ENCODE measurements at regions of chr4 and their contacts with region 1.

Region 1: GRCh38 chr4:7192252-7193029 is at the start of gene SORCS2:
- DNase-seq: peak; percentile 60 to 81 (median 71)
- ATAC-seq: peak; percentile 44 to 90 (median 74)
- H3K4me3 ChIP-seq: peak within 1 kb of the TSS; percentile 19 to 56 (median 44)
- H3K27ac ChIP-seq: no peak within 1 kb of the TSS
- H3K4me1 ChIP-seq: peaks cover 0 to 21% (median 12%) of the 10 kb centered on the region in 12 donors
- H3K27me3 ChIP-seq: peaks cover 10 to 63% (median 36%) of the 10 kb centered on the region in 9 donors
- CTCF ChIP-seq: peak; percentile 10 to 88 (median 68)
- POLR2A ChIP-seq: no peak
- total RNA-seq, gene SORCS2: 1.7 to 5.5 (median 3.2) TPM

Region 2: GRCh38 chr4:7101692-7102515 is 90.5 kb before region 1 on chr4:
- intact Hi-C with region 1: loop called in 1 of 10 experiments (anchors 5 kb)
- DNase-seq: peak; percentile 68 to 89 (median 75)
- ATAC-seq: peak; percentile 70 to 79 (median 76)
- H3K4me3 ChIP-seq: peak overlapping the region in 11 of 12 donors; percentile 54 to 75 (median 66)
- H3K27ac ChIP-seq: peak overlapping the region in 6 of 12 donors; percentile 72 to 90 (median 88)
- H3K4me1 ChIP-seq: peaks cover 0 to 28% (median 16%) of the 10 kb centered on the region in 12 donors
- H3K27me3 ChIP-seq: no peaks in the 10 kb centered on the region
- CTCF ChIP-seq: peak; percentile 56 to 88 (median 73)
- POLR2A ChIP-seq: no peak

Region 3: DNA sequence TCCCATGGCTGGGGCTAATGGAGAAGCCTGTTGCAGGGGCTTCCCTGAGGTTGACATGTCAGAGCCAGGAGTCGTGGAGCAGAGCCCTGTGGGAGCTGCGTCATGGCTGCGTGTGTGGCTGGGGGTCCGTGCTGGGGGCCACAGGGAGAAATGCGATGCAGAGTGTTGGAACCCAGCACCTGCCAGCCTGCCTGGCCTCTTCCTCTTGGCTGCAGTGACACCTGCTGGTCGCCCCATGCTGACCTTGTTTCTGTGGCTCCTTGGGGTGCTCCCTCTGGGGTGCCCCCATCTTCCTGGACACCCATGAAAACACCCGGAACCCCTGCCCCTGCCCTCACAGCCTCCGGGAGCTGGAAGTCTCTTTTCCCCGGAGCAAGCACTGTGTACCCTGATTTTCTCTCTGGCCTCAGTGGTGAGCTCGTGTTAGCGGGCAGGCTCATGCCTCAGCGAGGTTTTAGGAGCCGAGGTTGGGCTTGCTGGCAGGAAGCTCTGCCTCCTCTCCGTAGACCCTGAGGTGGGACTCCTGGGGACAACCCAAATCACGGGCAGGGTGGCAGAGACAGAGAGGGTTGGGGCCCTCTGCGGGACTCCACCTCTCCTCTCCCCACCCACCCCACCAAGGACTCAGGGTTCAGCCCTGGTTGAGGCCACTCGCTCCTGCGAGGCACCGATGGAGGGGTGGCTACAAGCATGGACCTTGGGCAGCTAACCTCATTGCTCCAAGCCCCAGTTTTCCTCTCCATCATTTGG is 103.6 kb after region 1 on chr4:
- intact Hi-C with region 1: loop called (anchors 1 to 2 kb)
- DNase-seq: peak in 4 of 5 donors; percentile 42 to 74 (median 44)
- ATAC-seq: peak in 3 of 4 donors; percentile 58 to 70 (median 59)
- H3K4me3 ChIP-seq: no peak overlapping the region
- H3K27ac ChIP-seq: peak overlapping the region in 1 of 12 donors; percentile 36
- H3K4me1 ChIP-seq: peaks cover 0 to 24% (median 8%) of the 10 kb centered on the region in 12 donors
- H3K27me3 ChIP-seq: peaks cover 0 to 4% (median 0%) of the 10 kb centered on the region in 9 donors
- CTCF ChIP-seq: peak; percentile 26 to 74 (median 66)
- POLR2A ChIP-seq: no peak

Region 4: GRCh38 chr4:7398104-7398423 is 205.6 kb after region 1 on chr4:
- intact Hi-C with region 1: loop called in 1 of 10 experiments (anchors 10 kb)
- DNase-seq: peak; percentile 53 to 87 (median 74)
- ATAC-seq: peak; percentile 53 to 88 (median 76)
- H3K4me3 ChIP-seq: no peak overlapping the region
- H3K27ac ChIP-seq: no peak overlapping the region
- H3K4me1 ChIP-seq: peaks cover 0 to 7% (median 0%) of the 10 kb centered on the region in 12 donors
- H3K27me3 ChIP-seq: peaks cover 0 to 3% (median 0%) of the 10 kb centered on the region in 9 donors
- CTCF ChIP-seq: peak in 3 of 12 donors; percentile 11 to 25 (median 24)
- POLR2A ChIP-seq: no peak

Region 5: GRCh38 chr4:7719354-7720174 is 527.1 kb after region 1 on chr4:
- intact Hi-C with region 1: loop called (anchors 2 to 10 kb)
- DNase-seq: peak; percentile 44 to 81 (median 59)
- ATAC-seq: peak; percentile 36 to 83 (median 62)
- H3K4me3 ChIP-seq: no peak overlapping the region
- H3K27ac ChIP-seq: no peak overlapping the region
- H3K4me1 ChIP-seq: peaks cover 0 to 6% (median under 1%) of the 10 kb centered on the region in 12 donors
- H3K27me3 ChIP-seq: peaks cover 0 to 13% (median 0%) of the 10 kb centered on the region in 9 donors
- CTCF ChIP-seq: peak; percentile 73 to 90 (median 84)
- POLR2A ChIP-seq: no peak

Region 6: DNA sequence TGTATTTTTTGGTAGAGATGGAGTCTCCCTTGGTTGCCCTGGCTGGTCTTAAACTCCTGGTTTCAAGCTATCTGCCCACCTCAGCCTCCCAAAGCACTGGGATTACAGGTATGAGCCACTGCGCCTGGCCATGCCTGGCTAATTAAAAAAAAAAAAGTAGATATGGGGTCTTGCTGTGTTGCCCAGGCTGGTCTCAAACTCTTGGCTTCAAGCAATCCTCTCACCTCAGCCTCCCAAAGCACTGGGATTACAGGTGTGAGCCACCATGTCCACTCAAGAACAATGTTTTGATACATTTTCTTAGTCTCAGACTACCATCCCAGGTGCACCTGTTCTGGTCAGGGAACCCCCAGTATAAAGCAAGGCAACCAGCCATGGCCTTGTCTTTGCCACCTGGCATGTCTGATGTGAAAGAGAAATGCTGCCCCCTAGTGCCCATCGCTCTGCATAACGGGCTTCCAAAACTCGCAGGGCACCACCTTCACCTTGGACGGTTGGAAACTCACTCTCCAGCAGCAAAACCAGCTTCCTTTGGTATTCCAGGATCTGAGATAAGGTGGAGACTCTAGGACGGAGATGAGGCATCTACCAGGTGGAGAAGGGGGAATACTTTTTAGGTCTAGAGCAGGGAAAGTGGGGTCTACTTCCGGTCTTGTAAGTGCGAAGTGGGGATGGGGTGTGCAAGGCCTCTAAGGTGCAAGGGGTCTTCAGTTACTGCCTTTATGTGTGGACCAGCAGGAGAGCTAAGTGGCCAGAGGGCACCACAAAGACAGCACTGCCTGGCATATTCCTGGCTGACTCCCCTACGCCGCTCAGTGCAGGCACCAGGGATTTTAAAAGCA is 794.9 kb after region 1 on chr4:
- intact Hi-C with region 1: loop called in 1 of 10 experiments (anchors 10 kb)
- DNase-seq: peak; percentile 64 to 72 (median 67)
- ATAC-seq: peak; percentile 46 to 79 (median 75)
- H3K4me3 ChIP-seq: no peak overlapping the region
- H3K27ac ChIP-seq: no peak overlapping the region
- H3K4me1 ChIP-seq: peaks cover 0 to 13% (median 7%) of the 10 kb centered on the region in 12 donors
- H3K27me3 ChIP-seq: no peaks in the 10 kb centered on the region
- CTCF ChIP-seq: peak; percentile 75 to 93 (median 86)
- POLR2A ChIP-seq: no peak

Measured in heart left ventricle (tissue), 16 donors.